Activated CD8-positive, alpha-beta memory T cell treated with anti-CD3 and anti-CD28 coated beads, Interleukin-2, amount 10 ng/mL, durations not matched to agents 7 days and 5 days (primary cell): ENCODE measurements at regions of chr1 and their contacts with region 1.

Region 1: GRCh38 chr1:116139592-116140134 is 28.5 kb downstream of the MAB21L3 start:
- DNase-seq: no peak
- ATAC-seq: no peak
- H3K4me3 Mint-ChIP-seq: no peak overlapping the region
- H3K27ac Mint-ChIP-seq: no peak overlapping the region
- H3K4me1 Mint-ChIP-seq: peaks cover 8% of the 10 kb centered on the region
- H3K27me3 Mint-ChIP-seq: peaks cover 13% of the 10 kb centered on the region

Region 2: DNA sequence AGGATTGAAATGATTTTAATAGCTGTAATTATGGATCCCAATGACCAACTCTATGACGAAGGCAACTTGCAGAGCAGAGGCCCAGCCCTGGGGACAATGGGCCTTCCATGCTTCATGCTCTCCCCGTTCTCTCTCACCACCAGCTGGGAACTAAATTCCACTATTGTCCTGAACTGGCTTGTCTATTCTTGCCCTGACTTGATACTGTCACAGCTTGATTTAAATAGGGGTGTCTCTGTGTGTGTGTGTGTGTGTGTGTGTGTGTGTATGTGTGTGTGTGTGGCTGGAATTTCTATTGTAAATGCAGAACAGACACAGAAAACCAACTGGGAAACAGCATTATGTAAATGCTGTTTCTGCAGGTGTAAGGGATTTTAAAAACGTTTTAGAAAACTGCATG is 106.3 kb before region 1 on chr1:
- CTCF ChIA-PET with region 1: no interaction called
- DNase-seq: no peak
- ATAC-seq: no peak
- H3K4me3 Mint-ChIP-seq: no peak overlapping the region
- H3K27ac Mint-ChIP-seq: no peak overlapping the region
- H3K4me1 Mint-ChIP-seq: no peaks in the 10 kb centered on the region
- H3K27me3 Mint-ChIP-seq: peaks cover 8% of the 10 kb centered on the region

Region 3: GRCh38 chr1:116075577-116076380 is 63.9 kb before region 1 on chr1:
- CTCF ChIA-PET with region 1: no interaction called
- DNase-seq: no peak
- ATAC-seq: no peak
- H3K4me3 Mint-ChIP-seq: no peak overlapping the region
- H3K27ac Mint-ChIP-seq: no peak overlapping the region
- H3K4me1 Mint-ChIP-seq: no peaks in the 10 kb centered on the region
- H3K27me3 Mint-ChIP-seq: peaks cover 10% of the 10 kb centered on the region

Region 4: DNA sequence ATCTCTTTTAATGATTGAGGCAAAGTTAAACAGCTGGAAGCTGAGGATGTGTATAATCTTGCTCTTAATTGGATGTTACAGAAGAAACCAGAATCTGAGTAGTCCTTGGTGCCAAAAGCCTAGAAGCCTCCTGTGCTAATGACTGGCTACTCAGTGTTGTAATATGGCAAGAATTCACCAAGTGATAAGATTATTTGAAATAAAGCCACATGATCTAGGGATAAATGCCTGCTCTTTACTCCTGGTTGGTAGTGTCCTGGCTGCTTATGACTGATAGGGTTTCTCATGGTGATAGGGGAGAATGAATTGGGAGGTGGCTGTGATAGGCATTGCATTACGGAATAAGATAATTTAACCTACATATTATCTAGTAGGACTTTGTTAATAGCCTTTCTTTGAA is 42.0 kb before region 1 on chr1:
- CTCF ChIA-PET with region 1: no interaction called
- DNase-seq: no peak
- ATAC-seq: no peak
- H3K4me3 Mint-ChIP-seq: no peak overlapping the region
- H3K27ac Mint-ChIP-seq: no peak overlapping the region
- H3K4me1 Mint-ChIP-seq: no peaks in the 10 kb centered on the region
- H3K27me3 Mint-ChIP-seq: peaks cover 12% of the 10 kb centered on the region

Region 5: DNA sequence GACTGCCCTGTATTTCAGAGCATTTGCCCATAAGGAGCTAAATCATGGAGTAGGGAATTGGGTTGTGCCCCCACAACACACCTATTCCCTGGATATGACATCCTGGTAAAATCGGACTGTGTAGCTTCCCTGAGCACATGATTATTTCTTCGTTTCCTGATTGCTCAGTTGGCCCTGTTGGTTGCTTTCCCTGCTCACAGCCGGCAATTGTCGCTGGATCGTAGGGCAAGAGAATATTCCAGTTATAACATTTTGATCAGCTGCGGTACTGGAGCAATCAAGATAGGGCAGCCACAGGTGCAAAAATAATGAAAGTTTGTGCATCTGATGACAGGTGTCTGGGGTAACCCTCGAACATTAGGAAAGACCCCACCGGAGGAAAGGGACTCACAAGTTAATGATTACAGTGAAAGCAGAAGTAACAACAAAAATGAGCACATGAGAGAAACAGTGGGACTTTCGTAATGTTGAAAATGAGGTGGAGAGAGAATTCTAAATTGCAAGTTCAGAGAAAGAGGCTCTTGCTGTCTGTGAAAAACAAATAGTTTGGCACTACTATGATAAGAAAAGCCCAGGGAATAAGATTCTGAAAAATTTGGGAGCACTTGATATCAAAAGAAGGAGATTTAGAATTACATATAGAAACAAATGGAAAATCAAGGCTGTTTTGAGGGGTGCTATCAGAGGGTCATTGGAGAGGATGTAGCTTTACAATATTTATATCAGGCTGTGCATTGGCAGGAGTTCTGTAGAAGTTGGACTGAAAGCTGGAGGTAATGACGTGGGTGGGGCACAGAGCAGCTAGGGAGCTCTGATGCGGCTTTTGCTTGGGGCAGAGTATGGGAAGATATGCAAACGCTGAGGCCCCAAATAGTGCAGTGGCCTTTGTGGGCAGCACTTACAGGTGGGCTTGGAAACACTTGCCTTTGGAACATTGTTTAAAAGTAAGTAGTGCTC is 28.8 kb before region 1 on chr1 and contains the start of gene MAB21L3:
- CTCF ChIA-PET with region 1: no interaction called
- DNase-seq: no peak
- ATAC-seq: no peak
- H3K4me3 Mint-ChIP-seq: no peak within 1 kb of the TSS
- H3K27ac Mint-ChIP-seq: no peak within 1 kb of the TSS
- H3K4me1 Mint-ChIP-seq: no peaks in the 10 kb centered on the region
- H3K27me3 Mint-ChIP-seq: peaks cover 20% of the 10 kb centered on the region
- total RNA-seq, gene MAB21L3: not detected

Region 6: GRCh38 chr1:116151739-116152576 is 12.3 kb after region 1 on chr1:
- CTCF ChIA-PET with region 1: interaction called, 66 read pairs
- DNase-seq: peak; percentile 78
- ATAC-seq: peak; percentile 98
- H3K4me3 Mint-ChIP-seq: peak overlapping the region; percentile 32
- H3K27ac Mint-ChIP-seq: no peak overlapping the region
- H3K4me1 Mint-ChIP-seq: peaks cover 7% of the 10 kb centered on the region
- H3K27me3 Mint-ChIP-seq: peaks cover 14% of the 10 kb centered on the region

Region 7: GRCh38 chr1:116377541-116378529 is 238.2 kb after region 1 on chr1:
- CTCF ChIA-PET with region 1: interaction called, 10 read pairs
- DNase-seq: peak; percentile 67
- ATAC-seq: peak; percentile 66
- H3K4me3 Mint-ChIP-seq: peak overlapping the region; percentile 80
- H3K27ac Mint-ChIP-seq: peak overlapping the region; percentile 92
- H3K4me1 Mint-ChIP-seq: peaks cover 64% of the 10 kb centered on the region
- H3K27me3 Mint-ChIP-seq: no peaks in the 10 kb centered on the region

Region 8: DNA sequence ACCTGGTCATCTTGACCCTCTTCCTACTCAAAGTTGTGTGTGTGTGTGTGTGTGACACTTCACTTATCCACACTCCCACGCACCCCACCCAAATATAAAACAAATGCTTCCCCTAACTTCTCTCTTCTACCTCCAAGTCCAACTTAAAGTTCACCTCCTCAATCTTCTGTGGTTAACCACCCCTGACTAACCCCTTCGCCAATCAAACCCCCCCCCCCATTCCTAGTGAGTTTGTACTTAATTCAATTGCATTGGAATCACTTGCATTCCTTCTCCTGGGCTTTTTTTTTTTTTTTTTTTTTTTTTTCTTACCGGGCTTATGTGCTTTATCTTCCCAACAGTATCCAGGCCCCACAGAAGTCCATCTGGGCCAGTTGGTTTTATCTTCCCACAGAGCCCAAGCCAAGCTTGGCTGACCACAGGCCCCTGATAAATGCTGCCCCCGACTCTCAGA is 352.7 kb after region 1 on chr1:
- CTCF ChIA-PET with region 1: interaction called, 243 read pairs
- DNase-seq: no peak
- ATAC-seq: no peak
- H3K4me3 Mint-ChIP-seq: no peak overlapping the region
- H3K27ac Mint-ChIP-seq: no peak overlapping the region
- H3K4me1 Mint-ChIP-seq: peaks cover 19% of the 10 kb centered on the region
- H3K27me3 Mint-ChIP-seq: no peaks in the 10 kb centered on the region

Region 9: DNA sequence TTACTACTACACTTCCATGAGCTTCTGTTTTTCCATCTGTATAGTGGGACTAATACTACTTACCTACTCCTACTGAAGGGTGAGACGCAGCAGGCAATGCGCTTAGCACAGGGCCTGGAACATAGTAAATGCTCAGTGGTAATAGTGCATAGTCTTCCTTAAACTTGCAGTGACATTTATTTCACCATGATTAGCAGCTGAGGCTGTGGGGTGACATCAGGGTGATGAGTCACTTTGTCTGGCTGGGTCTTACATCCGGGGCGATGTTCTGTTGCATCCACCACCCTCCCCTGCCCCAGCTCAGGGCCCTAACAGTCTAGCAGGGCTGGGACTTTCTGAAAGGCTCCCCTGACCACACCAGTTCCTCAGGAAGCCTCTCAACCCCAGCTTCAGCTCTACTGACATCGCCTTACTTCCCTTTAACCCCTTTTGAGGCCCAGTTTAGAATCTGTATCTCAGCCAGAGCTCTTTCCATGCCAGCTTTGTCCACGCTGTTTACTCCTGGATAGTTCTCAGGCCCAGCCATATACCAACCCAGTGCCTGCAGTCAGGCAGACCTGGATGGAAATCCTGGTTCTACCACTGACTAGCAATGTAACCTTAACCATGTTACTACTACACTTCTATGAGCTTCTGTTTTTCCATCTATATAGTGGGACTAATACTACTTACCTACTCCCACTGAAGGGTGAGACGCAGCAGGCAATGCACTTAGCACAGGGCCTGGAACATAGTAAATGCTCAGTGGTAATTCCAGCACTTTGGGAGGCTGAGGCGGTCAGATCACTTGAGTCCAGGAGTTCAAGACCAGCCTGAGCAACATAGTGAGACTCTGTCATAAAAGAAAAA is 364.9 kb after region 1 on chr1:
- CTCF ChIA-PET with region 1: interaction called, 115 read pairs
- DNase-seq: peak; percentile 96
- ATAC-seq: peak; percentile 94
- H3K4me3 Mint-ChIP-seq: peak overlapping the region; percentile 18
- H3K27ac Mint-ChIP-seq: peak overlapping the region; percentile 92
- H3K4me1 Mint-ChIP-seq: peaks cover 76% of the 10 kb centered on the region
- H3K27me3 Mint-ChIP-seq: no peaks in the 10 kb centered on the region

Region 10: GRCh38 chr1:116574581-116575291 is 435.1 kb after region 1 on chr1:
- CTCF ChIA-PET with region 1: interaction called, 14 read pairs
- DNase-seq: peak; percentile 76
- ATAC-seq: no peak
- H3K4me3 Mint-ChIP-seq: no peak overlapping the region
- H3K27ac Mint-ChIP-seq: no peak overlapping the region
- H3K4me1 Mint-ChIP-seq: peaks cover 30% of the 10 kb centered on the region
- H3K27me3 Mint-ChIP-seq: peaks cover 5% of the 10 kb centered on the region